ENCODE measurements at regions of chr13 and their contacts with region 1.

Region 1: GRCh38 chr13:114151565-114152284 is 19.3 kb upstream of the RASA3 start:
- DNase-seq: peak in 8 of 10 donors; percentile 33 to 82 (median 60)
- ATAC-seq: peak; percentile 26
- H3K4me3 Mint-ChIP-seq: peak overlapping the region; percentile 65 to 84 (median 79)
- H3K27ac Mint-ChIP-seq: peak overlapping the region in 9 of 10 donors; percentile 97 to 100 (median 99)
- H3K4me1 Mint-ChIP-seq: peaks cover 40 to 81% (median 77%) of the 10 kb centered on the region in 4 donors
- H3K27me3 Mint-ChIP-seq: no peaks in the 10 kb centered on the region

Region 2: DNA sequence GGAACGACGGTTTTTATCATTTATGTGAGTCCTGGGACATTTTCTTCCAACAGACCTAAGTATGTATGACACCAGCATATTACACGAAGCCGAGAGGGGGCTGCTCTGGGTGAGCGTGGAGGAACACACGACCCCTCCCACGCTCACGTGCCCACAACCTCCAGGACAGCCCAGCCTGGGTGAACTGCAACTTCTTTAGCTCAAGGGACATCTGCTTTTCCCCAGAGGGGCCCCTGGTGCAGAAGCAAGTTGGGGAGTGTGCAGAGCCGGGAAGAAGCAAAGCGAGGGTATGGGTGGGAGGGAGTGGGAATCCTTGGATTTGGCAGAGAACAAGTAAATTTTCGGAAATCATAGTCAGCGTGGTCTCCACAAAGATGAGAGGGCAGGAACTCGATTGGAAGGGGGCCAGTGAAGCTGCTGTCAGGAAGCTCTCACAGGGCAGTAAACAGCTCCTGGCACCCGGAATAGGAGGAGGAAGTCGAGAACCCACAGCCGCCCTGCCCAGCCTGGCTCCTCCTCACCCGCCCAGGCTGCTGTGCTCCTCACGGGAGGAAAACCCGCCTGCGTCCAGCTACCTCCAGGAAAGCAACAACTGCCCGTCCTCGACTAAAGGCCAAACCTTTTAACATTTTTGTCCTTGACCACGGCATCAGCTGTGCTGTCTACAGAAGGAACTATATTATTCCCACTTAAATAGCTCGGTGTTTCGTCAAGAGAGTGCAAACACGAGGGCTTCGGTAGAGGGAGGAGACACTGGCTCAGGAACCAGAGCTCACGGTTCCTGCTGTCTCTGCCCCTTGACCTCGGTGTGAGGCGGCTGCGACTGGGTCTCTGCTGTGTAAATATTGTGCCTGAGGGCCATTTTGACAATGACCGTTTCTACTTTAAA is 10.2 kb after region 1 on chr13:
- POLR2A ChIA-PET with region 1: interaction called, 114 read pairs
- DNase-seq: peak in 4 of 10 donors; percentile 24 to 52 (median 40)
- ATAC-seq: peak; percentile 77 to 78
- H3K4me3 Mint-ChIP-seq: peak overlapping the region; percentile 54 to 87 (median 76)
- H3K27ac Mint-ChIP-seq: peak overlapping the region; percentile 60 to 99 (median 94)
- H3K4me1 Mint-ChIP-seq: peaks cover 38 to 93% (median 85%) of the 10 kb centered on the region in 4 donors
- H3K27me3 Mint-ChIP-seq: no peaks in the 10 kb centered on the region

Region 3: DNA sequence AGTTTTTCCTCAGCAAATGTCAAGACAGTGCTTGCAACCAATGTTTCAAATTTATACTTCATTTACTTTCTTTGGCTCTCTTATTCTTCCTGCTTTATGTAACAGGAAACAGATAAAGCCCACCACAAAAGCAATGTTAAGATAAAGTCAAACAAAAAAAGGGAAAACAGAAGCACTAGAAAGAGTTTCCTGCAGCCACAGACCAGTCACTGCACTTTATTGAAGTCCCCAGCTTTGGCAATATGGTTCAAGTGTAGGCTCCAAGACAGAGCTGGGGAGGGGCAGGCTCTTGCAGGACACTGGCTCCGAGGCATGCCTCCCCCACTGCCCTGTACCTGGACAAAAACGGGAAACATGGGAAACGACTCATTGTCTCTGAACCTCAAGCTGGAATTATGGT is 67.7 kb after region 1 on chr13:
- POLR2A ChIA-PET with region 1: interaction called, 17 read pairs
- DNase-seq: peak in 3 of 10 donors; percentile 47 to 58 (median 56)
- ATAC-seq: peak; percentile 79 to 86
- H3K4me3 Mint-ChIP-seq: peak overlapping the region; percentile 39 to 81 (median 71)
- H3K27ac Mint-ChIP-seq: peak overlapping the region; percentile 48 to 95 (median 85)
- H3K4me1 Mint-ChIP-seq: peaks cover 29 to 82% (median 74%) of the 10 kb centered on the region in 4 donors
- H3K27me3 Mint-ChIP-seq: peaks cover 0 to under 1% (median 0%) of the 10 kb centered on the region in 5 donors

Region 4: DNA sequence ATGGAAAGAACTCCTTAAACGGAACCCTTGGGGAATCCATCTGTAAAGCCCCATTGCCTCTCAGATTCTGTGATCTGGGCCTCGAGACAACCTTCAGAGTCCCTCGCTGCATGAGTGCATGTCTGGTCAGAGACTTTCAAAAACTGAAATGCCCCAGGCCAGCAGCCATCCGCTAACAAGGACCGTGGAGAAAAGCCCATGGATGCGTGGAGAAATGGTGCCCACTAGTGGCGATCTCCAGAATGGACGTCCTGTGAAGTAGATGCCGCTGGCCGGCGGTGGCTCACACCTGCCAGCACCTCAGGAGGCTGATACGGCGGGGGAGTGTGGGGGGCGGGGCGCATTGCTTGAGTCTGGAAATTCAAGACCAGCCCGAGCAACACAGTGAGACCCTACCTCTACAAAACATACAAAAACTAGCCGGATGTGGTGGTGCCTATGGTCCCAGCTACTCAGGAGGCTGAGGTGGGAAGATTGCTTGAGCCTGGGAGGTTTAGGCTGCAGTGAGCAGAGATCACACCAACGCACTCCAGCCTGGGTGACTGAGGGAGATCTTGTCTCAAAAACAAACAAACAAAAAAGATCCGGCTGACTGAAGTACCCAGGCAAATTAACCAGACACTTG is 75.1 kb after region 1 on chr13:
- POLR2A ChIA-PET with region 1: interaction called, 13 read pairs
- DNase-seq: peak; percentile 69 to 89 (median 80)
- ATAC-seq: peak; percentile 81 to 87
- H3K4me3 Mint-ChIP-seq: peak overlapping the region; percentile 7 to 76 (median 58)
- H3K27ac Mint-ChIP-seq: peak overlapping the region; percentile 78 to 95 (median 88)
- H3K4me1 Mint-ChIP-seq: peaks cover 20 to 49% (median 49%) of the 10 kb centered on the region in 4 donors
- H3K27me3 Mint-ChIP-seq: peaks cover 0 to 7% (median 4%) of the 10 kb centered on the region in 5 donors

Measured in naive thymus-derived CD8-positive, alpha-beta T cell (primary cell).